H1 (cell line): ENCODE measurements at regions of chr10 and their contacts with region 1.

Region 1: GRCh38 chr10:98388101-98388655 is 26.8 kb downstream of the PYROXD2 start:
- DNase-seq: peak; percentile 15 to 51
- H3K4me3 ChIP-seq: no peak overlapping the region
- H3K27ac ChIP-seq: no peak overlapping the region
- H3K4me1 ChIP-seq: no peaks in the 10 kb centered on the region
- H3K27me3 ChIP-seq: no peaks in the 10 kb centered on the region
- CTCF ChIP-seq: peak; percentile 23 to 50 (median 40); a peak in 3 of 4 replicates
- EP300 ChIP-seq: no peak
- POLR2A ChIP-seq: no peak
- RAD21 ChIP-seq: peak; percentile 15 to 31; a peak in 3 of 4 replicates

Region 2: GRCh38 chr10:98349508-98349922 is 38.7 kb before region 1 on chr10:
- CTCF ChIA-PET with region 1: no interaction called
- POLR2A ChIA-PET with region 1: no interaction called
- DNase-seq: no peak
- H3K4me3 ChIP-seq: no peak overlapping the region
- H3K27ac ChIP-seq: no peak overlapping the region
- H3K4me1 ChIP-seq: no peaks in the 10 kb centered on the region
- H3K27me3 ChIP-seq: 0 out of 7 replicates have a peak, but pooled peaks cover 0 to 3% (median 0%) of the 10 kb centered on the region in 4 experiments
- CTCF ChIP-seq: no peak
- EP300 ChIP-seq: no peak
- POLR2A ChIP-seq: no peak
- RAD21 ChIP-seq: no peak

Region 3: DNA sequence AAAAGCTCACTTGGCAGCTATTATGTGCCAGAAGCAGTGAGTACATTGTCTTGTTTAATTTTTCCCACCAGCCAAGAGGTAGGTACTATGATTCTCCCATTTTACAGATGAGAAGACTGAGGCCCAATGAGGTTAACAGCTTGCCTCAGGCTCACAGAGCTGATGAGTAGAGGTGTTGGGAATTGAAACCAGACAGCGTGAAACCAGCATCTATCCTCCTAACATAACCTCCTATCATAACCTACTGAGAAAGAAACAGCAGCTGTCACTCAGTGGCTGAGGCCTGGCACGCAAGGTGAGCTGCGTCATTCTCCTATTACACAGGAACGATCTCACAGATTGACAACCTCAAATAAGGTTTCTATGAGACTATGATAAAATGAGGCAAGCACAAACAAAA is 20.6 kb after region 1 on chr10:
- CTCF ChIA-PET with region 1: interaction called, 10 read pairs
- POLR2A ChIA-PET with region 1: no interaction called
- DNase-seq: no peak
- H3K4me3 ChIP-seq: no peak overlapping the region
- H3K27ac ChIP-seq: no peak overlapping the region
- H3K4me1 ChIP-seq: no peaks in the 10 kb centered on the region; a peak in 2 of 7 replicates
- H3K27me3 ChIP-seq: no peaks in the 10 kb centered on the region
- CTCF ChIP-seq: no peak
- EP300 ChIP-seq: no peak
- POLR2A ChIP-seq: no peak
- RAD21 ChIP-seq: no peak

Region 4: GRCh38 chr10:98467506-98468346 is 79.5 kb after region 1 on chr10:
- CTCF ChIA-PET with region 1: no interaction called
- POLR2A ChIA-PET with region 1: no interaction called
- DNase-seq: peak; percentile 46 to 70
- H3K4me3 ChIP-seq: peak overlapping the region; percentile 5 to 54 (median 28); a peak in 7 of 8 replicates
- H3K27ac ChIP-seq: no peak overlapping the region
- H3K4me1 ChIP-seq: peaks cover 0 to 13% (median 2%) of the 10 kb centered on the region in 4 experiments; a peak in 4 of 7 replicates
- H3K27me3 ChIP-seq: peaks cover 0 to 4% (median 1%) of the 10 kb centered on the region in 4 experiments; a peak in 2 of 7 replicates
- CTCF ChIP-seq: peak; percentile 72 to 91 (median 83)
- EP300 ChIP-seq: no peak
- POLR2A ChIP-seq: no peak
- RAD21 ChIP-seq: peak; percentile 94 to 97